ENCODE measurements at regions of chr13 and their contacts with region 1.

Region 1: GRCh38 chr13:39602614-39603366 is at the start of gene LHFPL6:
- DNase-seq: peak; percentile 94
- H3K4me3 ChIP-seq: peak within 1 kb of the TSS; percentile 94
- H3K27ac ChIP-seq: peak within 1 kb of the TSS; percentile 63
- H3K4me1 ChIP-seq: peaks cover 39% of the 10 kb centered on the region
- H3K27me3 ChIP-seq: no peaks in the 10 kb centered on the region
- total RNA-seq, gene LHFPL6: 74.4 and 91.2 TPM in 2 replicates

Region 2: GRCh38 chr13:39037880-39038568 is 564.8 kb before region 1 on chr13 and contains the starts of genes NHLRC3 and PROSER1:
- in situ Hi-C with region 1: loop called (anchors 25 kb)
- DNase-seq: peak; percentile 94
- H3K4me3 ChIP-seq: peak within 1 kb of the TSS; percentile 97
- H3K27ac ChIP-seq: peak within 1 kb of the TSS; percentile 65
- H3K4me1 ChIP-seq: peaks cover 17% of the 10 kb centered on the region
- H3K27me3 ChIP-seq: no peaks in the 10 kb centered on the region
- total RNA-seq, gene NHLRC3: 7.6 and 12.9 TPM in 2 replicates
- total RNA-seq, gene PROSER1: 6.7 and 19.3 TPM in 2 replicates

Region 3: DNA sequence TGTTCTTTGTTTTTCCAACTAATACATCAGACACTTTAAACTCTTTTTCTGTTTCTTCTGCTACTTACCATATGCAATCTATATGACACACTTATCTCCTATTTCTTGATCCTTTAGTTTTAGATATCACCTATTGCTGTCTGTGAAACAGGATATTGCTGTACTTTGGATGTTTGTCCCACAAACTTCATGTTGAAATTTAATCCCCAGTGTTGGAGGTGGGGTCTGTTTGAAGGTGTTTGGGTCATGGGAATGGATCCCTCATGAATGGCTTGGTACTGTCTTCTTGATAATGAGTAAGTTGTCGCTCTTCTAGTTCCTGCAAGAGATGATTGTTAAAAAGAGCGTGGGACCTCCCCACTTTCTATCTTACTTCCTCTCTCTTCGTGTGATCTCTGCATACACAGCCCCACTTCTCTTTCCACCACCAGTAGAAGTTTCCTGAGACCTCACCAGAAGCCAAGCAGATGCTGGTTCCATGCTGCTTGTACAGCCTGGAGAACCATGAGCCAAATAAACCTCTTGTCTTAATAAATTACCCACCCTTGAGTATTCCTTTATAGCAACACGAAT is 320.3 kb before region 1 on chr13:
- in situ Hi-C with region 1: loop called (anchors 25 kb)
- DNase-seq: no peak
- H3K4me3 ChIP-seq: no peak overlapping the region
- H3K27ac ChIP-seq: no peak overlapping the region
- H3K4me1 ChIP-seq: no peaks in the 10 kb centered on the region
- H3K27me3 ChIP-seq: no peaks in the 10 kb centered on the region

Region 4: DNA sequence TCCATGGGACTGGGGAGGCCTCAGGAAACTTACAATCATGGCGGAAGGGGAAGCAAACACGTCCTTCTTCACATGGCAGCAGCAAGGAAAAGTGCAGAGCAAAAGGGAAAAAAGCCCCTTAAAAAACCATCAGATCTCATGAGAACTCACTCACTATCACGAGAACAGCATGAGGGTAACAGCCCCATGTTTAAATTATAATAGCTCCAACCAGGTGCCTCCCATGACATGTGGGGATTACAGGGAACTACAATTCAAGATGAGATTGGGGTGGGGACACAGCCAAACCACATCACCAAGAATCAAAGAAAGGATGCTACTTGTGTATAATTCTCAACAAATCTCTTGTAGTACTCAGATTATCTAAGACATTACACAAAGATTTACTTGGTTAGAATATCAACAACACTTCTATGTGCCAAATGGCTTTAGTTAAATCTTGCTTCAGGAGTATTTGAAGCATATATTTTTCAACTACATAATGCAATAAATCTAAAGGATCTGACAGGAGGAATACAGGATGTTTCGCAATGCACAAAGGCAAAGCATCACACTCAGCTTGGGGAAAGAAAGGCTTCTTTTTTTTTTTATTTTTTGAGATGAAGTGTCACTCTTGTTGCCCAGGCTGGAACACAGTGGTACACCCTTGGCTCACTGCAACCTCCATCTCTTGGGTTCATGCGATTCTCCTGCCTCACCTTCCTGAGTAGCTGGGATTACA is 179.8 kb before region 1 on chr13:
- in situ Hi-C with region 1: loop called (anchors 10 kb)
- DNase-seq: peak; percentile 21
- H3K4me3 ChIP-seq: no peak overlapping the region
- H3K27ac ChIP-seq: no peak overlapping the region
- H3K4me1 ChIP-seq: peaks cover 2% of the 10 kb centered on the region; the same call in 1 of the 2 replicates
- H3K27me3 ChIP-seq: no peaks in the 10 kb centered on the region

Region 5: DNA sequence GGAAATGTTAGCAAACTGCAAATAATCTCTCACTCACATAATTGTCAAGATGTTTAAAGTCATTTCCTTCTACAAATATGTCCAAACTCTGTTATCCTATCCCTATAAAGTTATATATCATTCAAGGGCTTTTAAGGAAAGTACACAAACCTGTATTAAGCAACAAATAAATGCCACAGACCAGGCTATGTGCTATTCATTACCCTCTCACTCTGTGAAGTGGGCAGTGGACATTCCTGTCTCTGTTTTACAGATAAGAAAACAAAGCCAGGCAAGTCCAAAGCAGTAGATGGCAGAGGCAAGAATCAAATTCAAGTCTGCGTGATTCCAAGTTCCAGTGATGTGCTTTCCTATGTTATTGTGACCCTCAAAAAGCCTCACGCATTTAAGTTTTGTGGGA is 140.4 kb before region 1 on chr13:
- in situ Hi-C with region 1: no loop called
- DNase-seq: peak; percentile 30
- H3K4me3 ChIP-seq: no peak overlapping the region
- H3K27ac ChIP-seq: no peak overlapping the region
- H3K4me1 ChIP-seq: peaks cover 26% of the 10 kb centered on the region
- H3K27me3 ChIP-seq: no peaks in the 10 kb centered on the region

Measured in GM23248 (cell line).